ENCODE measurements at regions of chr2 and their contacts with region 1.

Region 1: DNA sequence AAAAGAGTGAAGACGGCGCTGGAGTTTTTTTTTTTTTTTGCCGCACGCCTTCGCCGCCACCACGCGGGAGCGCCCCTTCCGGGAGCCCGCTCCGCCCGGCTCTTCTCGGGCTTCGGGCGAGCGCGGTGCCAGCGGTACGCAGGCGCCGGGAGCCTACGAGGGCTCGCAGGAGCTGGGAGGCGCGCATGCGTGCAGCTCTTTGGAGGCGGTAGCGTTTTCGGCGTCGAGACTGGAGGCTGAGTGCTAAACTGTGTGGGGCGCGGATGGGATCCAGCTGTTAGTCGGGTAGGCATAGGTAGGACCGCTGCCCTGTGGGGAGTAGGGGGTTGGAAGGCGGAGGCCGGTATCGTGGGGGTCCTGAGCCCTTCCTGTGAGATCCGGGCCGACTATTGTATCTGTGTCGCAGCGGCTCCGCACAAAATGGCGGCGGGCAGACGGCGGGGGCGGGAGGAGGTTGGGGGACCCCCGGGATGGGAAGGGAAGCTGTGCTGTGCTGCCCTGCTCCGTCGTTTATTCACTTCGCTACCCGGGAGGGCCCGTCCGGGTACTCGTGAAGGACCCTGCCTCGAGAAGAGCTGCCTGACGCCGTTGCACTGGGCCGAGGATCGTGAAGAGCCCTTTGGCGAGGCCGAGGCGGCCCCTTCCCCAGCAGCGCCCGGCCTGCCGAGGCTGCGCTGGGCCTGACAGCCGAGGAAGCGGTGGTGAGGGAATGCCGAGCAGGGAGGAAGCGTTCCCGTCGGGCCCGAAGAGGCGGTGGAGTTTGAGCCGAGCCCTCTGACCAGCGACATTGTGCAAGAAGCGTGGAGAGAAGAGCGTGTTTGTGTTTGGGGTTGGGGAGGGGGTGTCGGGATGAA is at the start of gene ZNF638:
- DNase-seq: peak; percentile 93
- H3K4me3 Mint-ChIP-seq: peak within 1 kb of the TSS; percentile 100
- H3K27ac Mint-ChIP-seq: peak within 1 kb of the TSS; percentile 86
- H3K4me1 Mint-ChIP-seq: peaks cover 17% of the 10 kb centered on the region
- H3K27me3 Mint-ChIP-seq: no peaks in the 10 kb centered on the region
- CTCF ChIP-seq: peak; percentile 63
- total RNA-seq, gene ZNF638: 127 and 132 TPM in 2 replicates

Region 2: GRCh38 chr2:71130113-71130904 is 201.5 kb before region 1 on chr2 and contains the starts of genes MCEE and MPHOSPH10:
- CTCF ChIA-PET with region 1: no interaction called
- intact Hi-C with region 1: no loop called
- DNase-seq: peak; percentile 89
- H3K4me3 Mint-ChIP-seq: no peak within 1 kb of the TSS
- H3K27ac Mint-ChIP-seq: no peak within 1 kb of the TSS
- H3K4me1 Mint-ChIP-seq: no peaks in the 10 kb centered on the region
- H3K27me3 Mint-ChIP-seq: no peaks in the 10 kb centered on the region
- CTCF ChIP-seq: no peak
- total RNA-seq, gene MCEE: 16.2 and 18.7 TPM in 2 replicates
- total RNA-seq, gene MPHOSPH10: 54.7 and 67.8 TPM in 2 replicates

Region 3: GRCh38 chr2:71226965-71227560 is 104.7 kb before region 1 on chr2 and contains the start of gene PAIP2B:
- CTCF ChIA-PET with region 1: interaction called, 13 read pairs
- intact Hi-C with region 1: loop called (anchors 2 kb)
- DNase-seq: peak; percentile 98
- H3K4me3 Mint-ChIP-seq: peak within 1 kb of the TSS; percentile 94
- H3K27ac Mint-ChIP-seq: peak within 1 kb of the TSS; percentile 91
- H3K4me1 Mint-ChIP-seq: peaks cover 9% of the 10 kb centered on the region
- H3K27me3 Mint-ChIP-seq: peaks cover 39% of the 10 kb centered on the region
- CTCF ChIP-seq: no peak
- total RNA-seq, gene PAIP2B: 3.6 and 4.0 TPM in 2 replicates

Region 4: DNA sequence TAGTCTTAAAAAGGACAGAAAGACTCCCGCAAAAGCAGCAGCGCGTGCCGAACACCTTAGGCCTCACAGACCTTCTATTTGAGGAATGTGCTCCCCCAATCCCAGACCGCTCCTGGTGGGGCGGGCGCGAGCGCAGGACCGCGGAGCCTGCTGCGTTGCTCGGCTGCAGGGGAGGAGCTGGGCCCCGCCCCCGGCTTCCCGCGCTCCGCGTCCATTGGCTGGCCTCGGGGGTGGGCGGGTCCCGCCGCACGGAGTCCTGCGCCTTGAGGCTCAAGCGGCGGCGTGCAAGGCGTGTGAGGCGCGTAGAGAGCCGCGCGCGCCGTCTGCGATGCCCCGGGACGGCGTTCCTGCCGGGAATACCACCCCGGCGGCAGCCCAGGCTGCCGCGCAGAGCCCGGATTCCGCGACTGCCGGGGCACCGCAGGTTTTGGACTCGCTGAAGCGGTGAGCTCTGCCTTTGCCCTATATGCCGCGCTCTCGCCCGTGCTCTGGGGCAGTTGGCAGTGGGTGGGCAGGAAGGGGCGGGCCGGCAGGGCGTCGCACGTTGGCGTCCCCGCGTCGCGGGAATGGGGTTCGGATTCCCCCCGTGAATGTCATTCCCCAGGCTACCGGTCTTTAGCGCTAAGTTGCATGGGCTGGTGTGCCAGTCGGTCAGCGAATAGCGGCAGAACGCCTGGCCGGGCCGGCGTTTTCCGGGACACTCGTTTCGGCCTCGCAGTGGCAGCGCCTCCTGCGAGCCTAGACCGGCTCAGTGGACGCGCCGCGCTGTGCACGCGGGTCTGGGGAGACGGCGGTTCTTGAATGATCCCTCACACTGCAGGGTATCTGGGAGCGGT is 55.3 kb before region 1 on chr2:
- CTCF ChIA-PET with region 1: interaction called, 20 read pairs
- intact Hi-C with region 1: no loop called
- DNase-seq: peak; percentile 98
- H3K4me3 Mint-ChIP-seq: peak overlapping the region; percentile 86
- H3K27ac Mint-ChIP-seq: peak overlapping the region; percentile 41
- H3K4me1 Mint-ChIP-seq: peaks cover 20% of the 10 kb centered on the region
- H3K27me3 Mint-ChIP-seq: peaks cover 42% of the 10 kb centered on the region
- CTCF ChIP-seq: no peak

Region 5: GRCh38 chr2:71299507-71299906 is 32.3 kb before region 1 on chr2:
- CTCF ChIA-PET with region 1: interaction called, 36 read pairs
- intact Hi-C with region 1: no loop called
- DNase-seq: peak; percentile 4
- H3K4me3 Mint-ChIP-seq: no peak overlapping the region
- H3K27ac Mint-ChIP-seq: no peak overlapping the region
- H3K4me1 Mint-ChIP-seq: no peaks in the 10 kb centered on the region
- H3K27me3 Mint-ChIP-seq: no peaks in the 10 kb centered on the region
- CTCF ChIP-seq: peak; percentile 55